Activated T-helper 2 cell treated with anti-CD3 and anti-CD28 coated beads, Interferon-gamma antibody, Interleukin-2, Interleukin-4, amounts not matched to agents 10 μg/mL and 5 μg/mL and 100 μg/mL, durations not matched to agents 14 hours and 24 hours and 36 hours (primary cell): ENCODE measurements at regions of chr14 and their contacts with region 1.

Region 1: DNA sequence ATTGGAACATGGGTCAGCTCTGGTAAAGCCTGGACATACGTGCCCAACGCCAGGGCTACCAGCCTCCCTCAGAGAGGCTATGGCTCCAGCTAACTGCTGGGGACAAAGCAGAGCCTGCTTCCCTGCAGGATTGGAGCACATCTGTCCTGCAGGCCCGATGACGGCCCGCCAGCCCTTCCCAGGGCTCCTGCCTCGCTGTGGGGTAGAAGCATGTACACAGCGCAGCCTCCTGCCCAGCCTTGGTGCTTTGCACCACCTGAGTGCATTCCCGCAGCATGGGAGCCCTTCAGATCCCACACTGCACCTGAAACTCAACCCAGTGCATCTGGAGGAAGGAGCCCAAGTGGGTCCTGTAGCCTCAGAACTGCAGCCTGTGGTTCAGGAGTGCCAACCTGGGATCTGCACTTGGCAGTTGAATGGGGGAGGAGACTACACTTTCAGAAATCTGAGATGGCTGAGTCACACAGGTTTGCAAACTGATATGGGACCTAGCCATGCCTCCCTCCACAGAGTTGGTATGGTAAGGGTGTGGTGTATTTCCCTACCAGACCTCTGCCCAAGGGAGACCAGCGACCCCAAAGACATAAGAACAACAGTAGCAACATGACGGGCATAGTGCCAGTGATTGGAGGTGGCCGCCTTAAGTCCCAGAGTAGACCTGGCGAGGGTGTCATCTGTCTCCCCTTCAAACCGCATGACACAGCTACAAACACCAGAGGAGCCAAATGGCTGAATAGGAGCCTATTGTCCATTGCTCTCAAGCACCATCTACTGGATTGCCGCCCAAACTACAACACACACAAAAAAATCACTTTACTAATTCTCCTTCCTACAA is 273.9 kb upstream of the MIS18BP1 start:
- DNase-seq: no peak
- H3K4me3 Mint-ChIP-seq: no peak overlapping the region
- H3K27ac Mint-ChIP-seq: no peak overlapping the region
- H3K4me1 Mint-ChIP-seq: no peaks in the 10 kb centered on the region
- H3K27me3 Mint-ChIP-seq: no peaks in the 10 kb centered on the region

Region 2: GRCh38 chr14:45426670-45427282 is 100.2 kb before region 1 on chr14:
- intact Hi-C with region 1: loop called (anchors 5 kb)
- DNase-seq: no peak
- H3K4me3 Mint-ChIP-seq: no peak overlapping the region
- H3K27ac Mint-ChIP-seq: no peak overlapping the region
- H3K4me1 Mint-ChIP-seq: no peaks in the 10 kb centered on the region
- H3K27me3 Mint-ChIP-seq: no peaks in the 10 kb centered on the region

Region 3: DNA sequence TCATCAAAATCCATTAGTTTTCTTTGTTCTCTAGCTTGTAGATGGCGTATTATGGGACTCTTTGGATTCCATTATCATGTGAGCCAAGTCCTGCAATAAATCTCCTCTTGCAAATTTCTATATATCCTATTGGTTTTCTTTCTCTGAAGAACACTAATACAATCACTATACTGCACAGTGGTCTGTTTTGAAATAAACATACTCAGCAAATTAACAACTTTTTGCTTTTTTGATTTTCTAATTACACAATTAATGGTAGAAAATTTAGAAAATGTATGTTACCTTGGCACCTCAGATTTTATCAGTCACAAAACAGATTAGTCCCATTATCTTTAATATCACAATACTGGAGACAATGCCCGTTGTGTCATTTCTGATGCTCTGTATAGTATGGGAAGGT is 239.3 kb after region 1 on chr14:
- intact Hi-C with region 1: no loop called
- DNase-seq: no peak
- H3K4me3 Mint-ChIP-seq: no peak overlapping the region
- H3K27ac Mint-ChIP-seq: no peak overlapping the region
- H3K4me1 Mint-ChIP-seq: no peaks in the 10 kb centered on the region
- H3K27me3 Mint-ChIP-seq: no peaks in the 10 kb centered on the region